ENCODE measurements at regions of chr2 and their contacts with region 1.

Region 1: GRCh38 chr2:210503001-210503623 is 26.6 kb upstream of the LANCL1 start:
- DNase-seq: peak; percentile 36 to 48
- H3K4me3 ChIP-seq: no peak overlapping the region
- H3K4me3 Mint-ChIP-seq: no peak overlapping the region
- H3K27ac Mint-ChIP-seq: no peak overlapping the region
- H3K4me1 ChIP-seq: no peaks in the 10 kb centered on the region
- H3K4me1 Mint-ChIP-seq: no peaks in the 10 kb centered on the region
- H3K27me3 ChIP-seq: no peaks in the 10 kb centered on the region
- H3K27me3 Mint-ChIP-seq: peaks cover 2% of the 10 kb centered on the region
- CTCF ChIP-seq: peak; percentile 82 to 95

Region 2: GRCh38 chr2:210548878-210549384 is 45.8 kb after region 1 on chr2:
- CTCF ChIA-PET with region 1: no interaction called
- POLR2A ChIA-PET with region 1: no interaction called
- intact Hi-C with region 1: loop called (anchors 1 kb)
- DNase-seq: peak in 1 of 2 experiments; percentile 18
- H3K4me3 ChIP-seq: no peak overlapping the region
- H3K4me3 Mint-ChIP-seq: no peak overlapping the region
- H3K27ac Mint-ChIP-seq: no peak overlapping the region
- H3K4me1 ChIP-seq: no peaks in the 10 kb centered on the region
- H3K4me1 Mint-ChIP-seq: peaks cover 7% of the 10 kb centered on the region
- H3K27me3 ChIP-seq: no peaks in the 10 kb centered on the region
- H3K27me3 Mint-ChIP-seq: no peaks in the 10 kb centered on the region
- CTCF ChIP-seq: no peak

Region 3: GRCh38 chr2:210577263-210578071 is 74.4 kb after region 1 on chr2:
- CTCF ChIA-PET with region 1: no interaction called
- POLR2A ChIA-PET with region 1: no interaction called
- intact Hi-C with region 1: loop called (anchors 1 kb)
- DNase-seq: peak in 1 of 2 experiments; percentile 31
- H3K4me3 ChIP-seq: no peak overlapping the region
- H3K4me3 Mint-ChIP-seq: no peak overlapping the region
- H3K27ac Mint-ChIP-seq: no peak overlapping the region
- H3K4me1 ChIP-seq: no peaks in the 10 kb centered on the region
- H3K4me1 Mint-ChIP-seq: no peaks in the 10 kb centered on the region
- H3K27me3 ChIP-seq: no peaks in the 10 kb centered on the region
- H3K27me3 Mint-ChIP-seq: no peaks in the 10 kb centered on the region
- CTCF ChIP-seq: peak; percentile 77 to 82